HAP-1 (cell line): ENCODE measurements at regions of chr7 and their contacts with region 1.

Region 1: DNA sequence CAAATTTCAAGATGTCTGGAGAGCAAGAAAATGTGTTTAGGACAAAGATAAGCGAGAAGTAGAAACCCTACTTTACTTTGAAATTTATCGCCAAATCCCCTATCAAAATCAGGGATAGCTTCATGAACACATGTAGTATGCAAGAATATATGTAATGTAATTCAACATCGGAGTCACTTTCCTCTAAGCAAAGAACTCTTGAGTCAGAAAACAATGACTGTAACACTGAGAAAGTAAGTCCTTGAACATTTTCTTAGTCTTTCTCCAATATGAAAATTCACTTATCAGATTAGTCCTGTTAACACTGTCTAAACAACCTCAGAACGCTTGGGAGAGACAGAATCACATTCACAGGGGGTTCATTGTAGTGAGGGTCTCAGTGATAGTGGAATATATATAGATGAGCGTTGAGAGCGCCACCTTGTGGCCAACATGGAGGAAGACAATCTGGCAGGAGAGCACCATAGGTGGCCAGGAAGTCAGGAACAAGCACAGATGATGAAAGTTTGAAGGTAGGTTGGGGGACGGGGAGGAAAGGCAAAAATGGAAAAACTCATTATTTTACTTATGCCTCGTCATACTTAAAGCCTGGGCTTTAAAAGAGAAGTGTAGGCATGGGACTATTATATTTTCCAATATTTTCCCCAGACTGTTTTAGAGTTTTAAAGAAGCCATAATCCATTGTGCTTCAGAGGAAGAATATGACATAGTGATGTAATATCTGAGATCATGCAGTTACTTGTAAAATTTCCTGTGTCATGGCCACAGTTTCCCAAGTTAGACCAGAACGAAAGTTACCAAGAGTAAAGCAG is 115.5 kb upstream of the GNAI1 start:
- DNase-seq: peak; percentile 74 to 76
- H3K4me3 ChIP-seq: no peak overlapping the region
- H3K4me1 ChIP-seq: no peaks in the 10 kb centered on the region
- H3K27me3 ChIP-seq: no peaks in the 10 kb centered on the region

Region 2: DNA sequence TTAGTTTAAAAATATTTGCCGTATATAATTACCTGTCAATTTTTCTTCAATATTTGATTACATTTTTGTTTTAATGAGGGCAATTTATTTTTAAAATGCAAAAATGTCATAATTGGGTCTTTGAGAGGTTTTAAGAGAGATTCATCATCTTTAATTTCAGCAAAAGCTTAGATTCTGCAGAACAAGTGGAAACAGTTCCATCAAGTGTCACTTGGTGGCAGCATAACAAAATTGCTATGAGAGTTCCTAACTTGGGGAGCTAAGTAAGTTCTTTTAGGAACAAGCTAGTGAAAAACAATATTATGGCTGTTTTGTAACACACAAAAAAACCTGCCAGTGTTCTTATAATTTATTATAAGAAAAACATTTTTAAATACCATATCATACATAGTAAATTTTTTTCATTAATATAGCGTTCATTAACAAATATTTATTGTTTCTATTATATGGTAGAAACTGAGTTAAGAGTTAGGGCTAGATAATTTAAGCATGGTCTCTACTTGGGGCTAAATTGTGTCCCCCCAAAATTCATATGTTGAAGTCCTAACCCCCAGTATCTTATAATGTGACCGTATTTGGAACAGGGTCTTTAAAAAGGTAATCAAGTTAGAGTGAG is 720.9 kb before region 1 on chr7:
- in situ Hi-C with region 1: loop called (anchors 25 kb)
- DNase-seq: peak; percentile 52 to 58
- H3K4me3 ChIP-seq: no peak overlapping the region
- H3K4me1 ChIP-seq: no peaks in the 10 kb centered on the region
- H3K27me3 ChIP-seq: no peaks in the 10 kb centered on the region

Region 3: DNA sequence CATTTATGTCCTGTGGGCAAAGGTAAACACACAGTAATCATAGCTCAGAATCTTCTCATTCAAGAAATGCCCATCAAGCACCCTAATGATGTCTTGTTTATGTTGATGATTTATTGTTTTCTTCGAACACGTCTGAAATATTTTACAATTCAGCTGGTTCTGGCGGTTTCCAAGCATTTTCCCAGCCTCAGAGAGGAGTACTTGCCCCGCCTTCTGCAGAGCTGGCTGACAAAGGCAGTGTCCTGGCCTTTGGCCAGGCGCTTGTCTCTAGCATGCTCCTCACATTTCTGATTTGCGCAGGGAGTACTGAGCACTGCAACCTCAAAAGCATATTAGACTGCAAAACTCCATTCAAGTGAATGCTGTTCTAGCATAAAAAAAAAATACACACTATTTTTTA is 198.8 kb before region 1 on chr7:
- in situ Hi-C with region 1: loop called (anchors 25 kb)
- DNase-seq: peak; percentile 23 to 66
- H3K4me3 ChIP-seq: no peak overlapping the region
- H3K4me1 ChIP-seq: no peaks in the 10 kb centered on the region
- H3K27me3 ChIP-seq: no peaks in the 10 kb centered on the region